Natural killer cell (primary cell): ENCODE measurements at regions of chr19 and their contacts with region 1.

Region 1: GRCh38 chr19:3665681-3666544 is 34.4 kb downstream of the PIP5K1C start:
- DNase-seq: peak; percentile 83 to 84
- ATAC-seq: peak; percentile 87 to 90 (median 88)
- H3K4me3 ChIP-seq: no peak overlapping the region
- H3K4me3 Mint-ChIP-seq: no peak overlapping the region
- H3K27ac ChIP-seq: no peak overlapping the region
- H3K27ac Mint-ChIP-seq: peak overlapping the region in 1 of 2 donors; percentile 27
- H3K4me1 ChIP-seq: peaks cover 24% of the 10 kb centered on the region
- H3K4me1 Mint-ChIP-seq: peaks cover 10 to 28% of the 10 kb centered on the region in 2 donors
- H3K27me3 ChIP-seq: no peaks in the 10 kb centered on the region
- H3K27me3 Mint-ChIP-seq: no peaks in the 10 kb centered on the region
- CTCF ChIP-seq: peak; percentile 90

Region 2: DNA sequence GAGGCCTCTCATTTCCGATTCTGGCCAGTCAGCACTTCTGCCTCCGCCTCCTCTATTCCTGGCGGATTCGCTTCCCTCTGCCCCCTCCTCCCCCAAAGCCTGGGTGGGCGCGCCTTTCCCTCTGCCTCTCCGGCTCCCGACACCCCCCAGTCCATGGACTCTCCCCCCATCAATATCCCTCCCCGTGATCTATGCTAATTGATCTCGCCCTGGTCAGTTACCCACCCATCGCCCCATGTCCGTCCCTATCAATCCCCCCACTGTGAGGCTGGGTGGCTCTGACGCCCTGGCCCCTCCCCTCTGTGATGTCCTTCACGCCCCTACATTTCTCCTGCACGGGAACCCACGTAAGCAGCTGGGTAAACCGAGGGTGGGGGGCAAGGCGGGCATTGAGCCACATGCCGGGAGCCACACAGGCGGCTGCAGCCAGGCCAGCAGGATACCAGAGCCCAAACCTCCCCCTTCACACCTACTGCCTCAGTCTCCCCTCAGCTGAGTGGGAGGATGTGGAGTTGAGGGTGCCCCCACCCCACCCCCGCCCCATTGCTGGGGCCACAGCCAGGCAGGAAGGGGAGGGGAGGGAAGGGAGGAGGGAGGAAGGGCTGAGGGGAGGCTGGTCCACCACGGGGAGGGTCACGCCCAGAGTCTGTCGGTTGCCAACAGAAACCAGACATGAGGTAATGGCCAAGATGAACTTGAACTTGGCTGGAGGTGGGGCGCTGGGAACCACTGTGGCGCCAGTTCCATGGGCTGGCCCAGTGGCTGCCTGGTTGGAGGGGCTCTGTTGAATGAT is 206.6 kb before region 1 on chr19:
- intact Hi-C with region 1: no loop called
- DNase-seq: no peak
- ATAC-seq: peak; percentile 35 to 69 (median 49)
- H3K4me3 ChIP-seq: no peak overlapping the region
- H3K4me3 Mint-ChIP-seq: no peak overlapping the region
- H3K27ac ChIP-seq: no peak overlapping the region
- H3K27ac Mint-ChIP-seq: no peak overlapping the region
- H3K4me1 ChIP-seq: peaks cover 4% of the 10 kb centered on the region
- H3K4me1 Mint-ChIP-seq: peaks cover 0 to 13% of the 10 kb centered on the region in 2 donors
- H3K27me3 ChIP-seq: no peaks in the 10 kb centered on the region
- H3K27me3 Mint-ChIP-seq: no peaks in the 10 kb centered on the region
- CTCF ChIP-seq: no peak

Region 3: DNA sequence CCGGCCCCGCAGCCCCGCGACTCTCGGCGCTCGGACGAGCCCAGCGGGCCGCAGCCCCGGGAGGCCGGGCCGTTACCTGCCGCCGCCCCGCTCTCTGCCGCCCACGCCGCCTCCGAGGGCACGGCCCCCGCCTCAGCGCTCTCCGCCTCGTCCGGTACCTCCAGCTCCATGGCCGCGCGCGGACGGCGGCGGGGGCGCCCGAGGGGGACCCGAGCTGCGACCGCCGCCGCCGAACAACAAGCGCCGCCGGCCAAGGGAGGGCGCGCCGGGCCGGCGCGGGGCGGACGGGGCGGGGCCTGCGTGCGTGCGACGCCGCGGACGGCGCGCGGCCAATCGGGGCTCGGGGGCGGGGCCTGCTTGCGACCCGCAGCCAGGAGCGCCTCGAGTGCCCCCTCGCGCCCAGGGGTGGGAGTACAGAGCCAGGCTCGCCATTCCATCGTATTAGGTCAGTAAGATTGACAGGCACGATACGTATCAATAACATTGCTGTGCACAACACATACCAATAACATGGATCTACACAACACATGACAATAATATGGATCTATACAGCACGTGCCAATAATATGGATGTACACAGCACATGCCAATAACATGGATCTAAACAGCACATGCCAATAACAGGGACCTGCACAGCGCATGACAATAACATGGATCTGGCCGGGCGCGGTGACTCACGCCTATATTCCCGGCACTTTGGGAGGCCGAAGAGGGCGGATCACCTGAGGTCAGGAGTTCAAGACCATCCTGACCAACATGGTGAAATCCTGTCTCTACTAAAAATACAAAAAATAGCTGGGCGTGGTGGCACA is 34.5 kb after region 1 on chr19 and contains the start of gene PIP5K1C:
- intact Hi-C with region 1: loop called (anchors 1 kb)
- DNase-seq: peak; percentile 95 to 96
- ATAC-seq: peak; percentile 93 to 99 (median 95)
- H3K4me3 ChIP-seq: peak within 1 kb of the TSS; percentile 51
- H3K4me3 Mint-ChIP-seq: peak within 1 kb of the TSS; percentile 84
- H3K27ac ChIP-seq: no peak within 1 kb of the TSS
- H3K27ac Mint-ChIP-seq: peak within 1 kb of the TSS; percentile 45 to 88
- H3K4me1 ChIP-seq: peaks cover 28% of the 10 kb centered on the region
- H3K4me1 Mint-ChIP-seq: peaks cover 12 to 45% of the 10 kb centered on the region in 2 donors
- H3K27me3 ChIP-seq: no peaks in the 10 kb centered on the region
- H3K27me3 Mint-ChIP-seq: no peaks in the 10 kb centered on the region
- CTCF ChIP-seq: peak; percentile 75
- total RNA-seq, gene PIP5K1C: 35.0 to 49.2 (median 36.8) TPM

Region 4: DNA sequence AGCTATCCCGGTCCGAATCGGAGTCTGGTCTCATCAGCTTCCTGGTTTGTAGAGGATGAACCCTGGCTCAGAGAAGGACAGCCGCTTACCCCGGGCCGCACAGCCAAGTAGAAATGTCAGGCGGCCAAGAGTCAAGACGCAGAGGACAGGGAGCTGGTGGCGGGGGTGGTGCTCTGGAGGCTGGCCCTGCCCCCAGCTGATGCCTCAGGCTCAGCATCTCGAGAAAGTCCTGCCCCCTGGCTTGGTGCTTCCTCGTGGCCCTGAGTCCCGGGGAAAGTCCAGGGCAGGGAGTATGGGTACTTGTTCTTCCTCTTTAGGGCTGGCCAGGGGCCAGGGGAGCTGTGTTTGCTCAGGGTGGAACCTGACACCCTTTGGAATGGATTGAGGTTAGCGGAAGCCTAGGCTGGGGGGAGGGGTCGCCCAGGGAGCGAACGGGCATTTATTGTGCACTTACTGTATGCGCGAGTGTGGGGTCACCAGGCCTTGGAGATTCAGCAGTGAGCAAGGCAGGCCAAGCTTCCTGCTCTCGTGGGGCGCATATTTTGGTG is 44.4 kb after region 1 on chr19:
- intact Hi-C with region 1: loop called (anchors 1 kb)
- DNase-seq: no peak
- ATAC-seq: peak in 2 of 3 donors; percentile 24 to 41
- H3K4me3 ChIP-seq: no peak overlapping the region
- H3K4me3 Mint-ChIP-seq: no peak overlapping the region
- H3K27ac ChIP-seq: no peak overlapping the region
- H3K27ac Mint-ChIP-seq: no peak overlapping the region
- H3K4me1 ChIP-seq: peaks cover 3% of the 10 kb centered on the region
- H3K4me1 Mint-ChIP-seq: peaks cover 0 to 9% of the 10 kb centered on the region in 2 donors
- H3K27me3 ChIP-seq: no peaks in the 10 kb centered on the region
- H3K27me3 Mint-ChIP-seq: no peaks in the 10 kb centered on the region
- CTCF ChIP-seq: no peak

Region 5: DNA sequence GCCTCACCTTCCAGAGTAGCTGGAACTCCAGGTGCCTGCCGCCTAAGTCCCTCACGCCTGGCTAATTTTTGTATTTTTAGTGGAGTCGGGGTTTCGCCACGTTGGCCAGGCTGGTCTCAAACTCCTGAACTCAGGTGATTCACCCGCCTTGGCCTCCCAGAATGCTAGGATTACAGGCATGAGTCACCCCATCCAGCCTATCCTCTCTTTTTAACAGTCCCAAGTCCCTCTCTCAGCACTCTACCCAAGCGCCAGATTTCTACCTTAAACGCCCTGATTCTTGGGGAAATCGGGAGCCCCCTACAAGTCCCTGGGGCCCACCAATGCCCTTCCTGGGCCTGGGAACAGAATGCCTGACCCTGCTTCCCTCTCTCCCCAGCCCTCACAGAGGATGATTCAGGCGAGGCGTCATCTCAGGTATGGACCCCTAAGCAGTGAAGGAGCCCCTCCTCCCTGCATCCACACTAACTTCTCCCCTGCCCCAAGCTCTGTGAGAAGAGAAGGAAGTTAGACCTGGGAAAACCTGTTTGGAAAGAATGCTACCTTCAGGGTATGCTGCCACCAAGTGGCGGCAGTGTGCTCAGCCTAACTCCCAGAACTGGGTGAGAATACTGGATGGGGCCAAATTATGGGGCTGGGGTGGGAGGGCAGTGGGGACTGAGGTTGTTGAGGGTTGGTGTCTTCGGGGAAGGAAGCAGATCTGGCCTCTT is 542.6 kb after region 1 on chr19:
- intact Hi-C with region 1: loop called (anchors 10 kb)
- DNase-seq: no peak
- ATAC-seq: peak in 1 of 3 donors; percentile 40
- H3K4me3 ChIP-seq: no peak overlapping the region
- H3K4me3 Mint-ChIP-seq: no peak overlapping the region
- H3K27ac ChIP-seq: no peak overlapping the region
- H3K27ac Mint-ChIP-seq: no peak overlapping the region
- H3K4me1 ChIP-seq: peaks cover 4% of the 10 kb centered on the region
- H3K4me1 Mint-ChIP-seq: peaks cover 0 to 13% of the 10 kb centered on the region in 2 donors
- H3K27me3 ChIP-seq: no peaks in the 10 kb centered on the region
- H3K27me3 Mint-ChIP-seq: peaks cover 0 to 4% of the 10 kb centered on the region in 2 donors
- CTCF ChIP-seq: peak; percentile 2